ENCODE measurements at regions of chr5 and their contacts with region 1.

Region 1: GRCh38 chr5:164048359-164048926 is 543.0 kb downstream of the MAT2B start:
- DNase-seq: no peak
- ATAC-seq: no peak

Region 2: DNA sequence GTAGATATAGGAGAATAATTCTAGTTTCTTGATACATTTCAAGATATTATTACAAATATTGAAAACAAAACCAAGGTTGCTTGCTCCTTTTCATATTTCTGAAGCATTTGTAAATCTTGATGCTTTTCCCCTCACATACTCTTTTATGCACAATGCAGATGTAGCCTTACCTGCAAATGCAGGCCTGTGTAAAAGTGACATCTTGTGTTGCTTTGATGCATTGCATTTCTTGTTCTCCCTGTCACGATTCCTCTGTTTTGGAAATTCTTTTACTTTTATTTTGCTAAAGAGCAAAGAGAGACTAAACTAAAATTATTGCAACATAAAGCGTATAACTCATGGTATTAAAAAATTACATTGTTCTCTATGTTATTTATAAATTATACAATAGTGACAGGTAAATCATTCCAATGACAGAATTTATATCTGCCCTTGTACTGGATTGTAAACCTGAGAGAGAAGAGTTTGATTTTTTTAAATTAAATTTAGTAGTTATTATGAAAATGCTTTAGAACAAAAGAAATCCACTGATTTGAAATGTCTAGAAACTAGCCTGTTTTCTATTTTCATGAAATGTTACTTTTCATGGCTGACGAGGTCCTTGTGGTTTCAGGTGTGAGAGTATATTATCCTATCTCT is 427.0 kb after region 1 on chr5:
- intact Hi-C with region 1: loop called (anchors 10 kb)
- DNase-seq: no peak
- ATAC-seq: no peak

Region 3: GRCh38 chr5:164934034-164934433 is 885.6 kb after region 1 on chr5:
- intact Hi-C with region 1: no loop called
- DNase-seq: no peak
- ATAC-seq: no peak